ENCODE measurements at regions of chr21 and their contacts with region 1.

Region 1: GRCh38 chr21:45140346-45140940 is 66.1 kb downstream of the ADARB1 start:
- DNase-seq: peak; percentile 91
- ATAC-seq: peak; percentile 92
- H3K4me3 ChIP-seq: no peak overlapping the region
- H3K27ac ChIP-seq: no peak overlapping the region
- H3K4me1 ChIP-seq: peaks cover 16% of the 10 kb centered on the region
- H3K27me3 ChIP-seq: no peaks in the 10 kb centered on the region
- CTCF ChIP-seq: peak; percentile 96

Region 2: GRCh38 chr21:45098867-45099266 is 41.6 kb before region 1 on chr21:
- CTCF ChIA-PET with region 1: interaction called, 13 read pairs
- POLR2A ChIA-PET with region 1: no interaction called
- intact Hi-C with region 1: no loop called
- DNase-seq: peak; percentile 52
- ATAC-seq: peak; percentile 48
- H3K4me3 ChIP-seq: no peak overlapping the region
- H3K27ac ChIP-seq: no peak overlapping the region
- H3K4me1 ChIP-seq: peaks cover 16% of the 10 kb centered on the region
- H3K27me3 ChIP-seq: no peaks in the 10 kb centered on the region
- CTCF ChIP-seq: peak; percentile 80

Region 3: GRCh38 chr21:45236481-45236880 is 96.0 kb after region 1 on chr21:
- CTCF ChIA-PET with region 1: interaction called, 4 read pairs
- POLR2A ChIA-PET with region 1: no interaction called
- intact Hi-C with region 1: loop called (anchors 1 kb)
- DNase-seq: peak; percentile 19
- ATAC-seq: peak; percentile 64
- H3K4me3 ChIP-seq: no peak overlapping the region
- H3K27ac ChIP-seq: no peak overlapping the region
- H3K4me1 ChIP-seq: no peaks in the 10 kb centered on the region
- H3K27me3 ChIP-seq: no peaks in the 10 kb centered on the region
- CTCF ChIP-seq: peak; percentile 22; the same call in 1 of the 2 replicates

Region 4: DNA sequence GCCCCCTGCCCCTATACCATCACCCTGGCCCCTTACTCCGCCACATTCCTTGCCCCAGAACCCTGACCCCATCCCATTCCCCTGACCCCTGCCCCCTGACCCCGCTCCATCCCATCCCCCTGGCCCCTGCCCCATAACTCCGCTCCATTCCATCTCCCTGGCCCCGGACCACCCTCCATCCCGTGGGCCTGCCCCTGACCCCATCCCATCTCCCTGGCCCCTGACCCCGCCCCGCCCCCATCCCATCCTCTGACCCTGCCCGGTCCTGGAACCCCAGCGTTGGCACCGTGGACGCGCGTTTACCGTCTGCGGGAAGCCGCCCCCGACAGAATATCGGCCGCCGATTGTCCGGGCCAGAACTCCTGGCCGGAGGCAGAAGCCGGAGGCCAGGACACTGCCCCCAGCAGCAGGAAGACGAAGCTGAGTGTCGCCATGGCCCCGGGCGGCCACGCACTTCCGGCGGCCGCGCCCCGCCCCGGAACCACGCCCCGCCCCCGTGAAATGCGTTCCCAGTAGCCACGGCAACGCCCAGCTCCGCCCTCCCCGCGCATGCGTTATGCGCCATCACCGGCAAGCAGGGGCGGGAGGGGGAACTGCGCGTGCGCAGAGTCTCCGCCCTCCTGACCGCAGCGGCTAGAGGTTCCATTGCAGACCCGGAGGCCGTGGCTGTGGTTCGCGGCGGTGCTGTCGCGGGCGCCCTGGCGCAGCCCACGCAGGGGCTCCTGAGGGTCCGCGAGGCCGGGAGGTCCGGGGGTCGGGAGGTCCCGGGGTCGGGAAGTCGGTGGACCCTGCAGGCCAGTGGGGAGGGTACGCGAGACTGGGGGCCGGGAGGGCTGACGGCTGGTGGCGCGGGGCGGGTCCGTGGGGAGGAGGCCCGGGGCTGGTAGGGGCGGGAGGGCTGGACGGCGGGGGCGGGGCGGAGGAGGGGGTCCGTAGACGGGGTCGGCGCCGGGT is 147.3 kb after region 1 on chr21 and contains the start of gene POFUT2:
- CTCF ChIA-PET with region 1: interaction called, 16 read pairs
- POLR2A ChIA-PET with region 1: no interaction called
- intact Hi-C with region 1: loop called (anchors 1 kb)
- DNase-seq: peak; percentile 98
- ATAC-seq: peak; percentile 65
- H3K4me3 ChIP-seq: peak within 1 kb of the TSS; percentile 92
- H3K27ac ChIP-seq: no peak within 1 kb of the TSS
- H3K4me1 ChIP-seq: peaks cover 16% of the 10 kb centered on the region
- H3K27me3 ChIP-seq: no peaks in the 10 kb centered on the region
- CTCF ChIP-seq: no peak
- total RNA-seq, gene POFUT2: 19.6 and 28.2 TPM in 2 replicates